ENCODE measurements at regions of chr3 and their contacts with region 1.

Region 1: DNA sequence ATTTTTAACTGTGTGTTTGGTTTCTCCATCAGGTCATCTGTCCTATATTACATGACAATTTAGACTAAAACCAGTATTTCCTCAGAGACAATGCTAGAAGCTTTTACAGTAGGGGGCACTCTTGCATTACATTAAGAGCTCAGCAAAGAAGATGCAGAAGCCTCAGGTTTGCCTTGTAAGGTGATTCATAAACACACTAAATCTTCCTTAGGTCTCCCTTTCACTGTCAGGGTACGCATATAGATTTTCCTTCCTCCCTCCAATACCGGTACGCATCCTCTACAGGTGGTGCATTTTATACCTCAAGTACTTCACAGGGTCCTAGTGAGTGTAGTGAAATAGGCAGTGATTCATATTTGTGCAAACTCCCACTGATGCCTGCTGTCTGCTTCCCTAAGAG is 46.5 kb downstream of the CD86 start:
- DNase-seq: no peak
- H3K4me3 Mint-ChIP-seq: peak overlapping the region; percentile 7
- H3K27ac Mint-ChIP-seq: peak overlapping the region; percentile 78
- H3K4me1 Mint-ChIP-seq: peaks cover 45% of the 10 kb centered on the region
- H3K27me3 Mint-ChIP-seq: no peaks in the 10 kb centered on the region

Region 2: GRCh38 chr3:121660356-121661171 is 441.1 kb before region 1 on chr3 and contains the start of gene HCLS1:
- CTCF ChIA-PET with region 1: interaction called, 4 read pairs
- POLR2A ChIA-PET with region 1: no interaction called
- intact Hi-C with region 1: loop called (anchors 5 kb)
- DNase-seq: peak; percentile 83
- H3K4me3 Mint-ChIP-seq: peak within 1 kb of the TSS; percentile 97
- H3K27ac Mint-ChIP-seq: peak within 1 kb of the TSS; percentile 100
- H3K4me1 Mint-ChIP-seq: peaks cover 47% of the 10 kb centered on the region
- H3K27me3 Mint-ChIP-seq: no peaks in the 10 kb centered on the region
- total RNA-seq, gene HCLS1: 249 to 251 TPM

Region 3: GRCh38 chr3:121883507-121883906 is 218.1 kb before region 1 on chr3:
- CTCF ChIA-PET with region 1: interaction called, 5 read pairs
- POLR2A ChIA-PET with region 1: no interaction called
- intact Hi-C with region 1: loop called (anchors 1 kb)
- DNase-seq: no peak
- H3K4me3 Mint-ChIP-seq: no peak overlapping the region
- H3K27ac Mint-ChIP-seq: no peak overlapping the region
- H3K4me1 Mint-ChIP-seq: peaks cover 2% of the 10 kb centered on the region
- H3K27me3 Mint-ChIP-seq: no peaks in the 10 kb centered on the region

Region 4: GRCh38 chr3:122258757-122259371 is 157.2 kb after region 1 on chr3:
- CTCF ChIA-PET with region 1: interaction called, 85 read pairs
- POLR2A ChIA-PET with region 1: interaction called, 16 read pairs
- intact Hi-C with region 1: loop called (anchors 1 kb)
- DNase-seq: peak; percentile 81
- H3K4me3 Mint-ChIP-seq: no peak overlapping the region
- H3K27ac Mint-ChIP-seq: peak overlapping the region; percentile 45
- H3K4me1 Mint-ChIP-seq: peaks cover 19% of the 10 kb centered on the region
- H3K27me3 Mint-ChIP-seq: peaks cover 15% of the 10 kb centered on the region

Region 5: GRCh38 chr3:122365073-122365472 is 263.4 kb after region 1 on chr3:
- CTCF ChIA-PET with region 1: no interaction called
- POLR2A ChIA-PET with region 1: interaction called, 6 read pairs
- intact Hi-C with region 1: loop called (anchors 5 kb)
- DNase-seq: no peak
- H3K4me3 Mint-ChIP-seq: no peak overlapping the region
- H3K27ac Mint-ChIP-seq: peak overlapping the region; percentile 94
- H3K4me1 Mint-ChIP-seq: peaks cover 26% of the 10 kb centered on the region
- H3K27me3 Mint-ChIP-seq: no peaks in the 10 kb centered on the region

Region 6: GRCh38 chr3:122415720-122416654 is 314.3 kb after region 1 on chr3 and contains the start of gene WDR5B:
- CTCF ChIA-PET with region 1: interaction called, 3 read pairs
- POLR2A ChIA-PET with region 1: no interaction called
- intact Hi-C with region 1: loop called (anchors 5 kb)
- DNase-seq: peak; percentile 99
- H3K4me3 Mint-ChIP-seq: peak within 1 kb of the TSS; percentile 91
- H3K27ac Mint-ChIP-seq: peak within 1 kb of the TSS; percentile 97
- H3K4me1 Mint-ChIP-seq: peaks cover 47% of the 10 kb centered on the region
- H3K27me3 Mint-ChIP-seq: peaks cover 1% of the 10 kb centered on the region
- total RNA-seq, gene WDR5B: 3.7 to 4.4 TPM

Measured in activated CD4-positive, alpha-beta memory T cell treated with anti-CD3 and anti-CD28 coated beads for 36 hours (primary cell).